A549 (cell line): ENCODE measurements at regions of chr1 and their contacts with region 1.

Region 1: DNA sequence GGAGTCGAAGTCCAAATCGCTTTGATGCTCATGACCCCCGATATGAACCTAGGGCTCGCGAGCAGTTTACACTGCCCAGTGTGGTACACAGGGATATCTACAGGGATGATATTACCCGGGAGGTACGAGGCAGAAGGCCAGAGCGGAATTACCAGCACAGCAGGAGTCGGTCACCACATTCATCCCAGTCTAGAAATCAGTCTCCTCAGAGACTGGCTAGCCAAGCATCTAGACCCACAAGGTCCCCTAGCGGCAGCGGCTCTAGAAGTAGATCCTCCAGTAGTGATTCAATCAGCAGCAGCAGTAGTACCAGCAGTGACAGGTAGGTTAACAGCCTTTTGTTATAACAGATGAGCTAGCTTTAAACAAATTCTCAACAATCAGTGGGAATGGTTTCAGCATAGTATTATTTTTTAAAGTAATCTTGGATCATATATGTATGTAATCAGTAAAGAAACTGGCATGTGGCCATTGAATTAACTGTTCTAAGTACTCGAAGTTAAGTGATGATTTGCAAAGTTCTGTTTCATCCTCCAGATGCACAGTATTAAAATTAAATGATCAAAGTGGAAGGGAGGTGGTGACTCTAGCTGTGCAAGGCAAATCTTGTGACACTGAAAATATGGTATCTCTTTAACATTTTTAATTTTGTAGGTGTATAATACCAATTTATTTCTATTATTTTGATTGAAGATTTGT is 29.0 kb downstream of the SPEN start:
- DNase-seq: peak; percentile 45 to 75
- ATAC-seq: peak; percentile 98 to 99
- H3K4me3 ChIP-seq: no peak overlapping the region
- H3K27ac ChIP-seq: no peak overlapping the region
- H3K4me1 ChIP-seq: peaks cover 22% of the 10 kb centered on the region; the same call in 2 of the 3 replicates
- CTCF ChIP-seq: peak; percentile 19; the same call in 1 of the 3 replicates
- EP300 ChIP-seq: no peak
- POLR2A ChIP-seq: no peak
- RAD21 ChIP-seq: peak; percentile 21 to 29; a peak in 2 of 5 replicates

Region 2: GRCh38 chr1:15810073-15810472 is 66.4 kb before region 1 on chr1:
- CTCF ChIA-PET with region 1: interaction called, 10 read pairs
- POLR2A ChIA-PET with region 1: no interaction called
- DNase-seq: no peak
- ATAC-seq: no peak
- H3K4me3 ChIP-seq: no peak overlapping the region
- H3K27ac ChIP-seq: no peak overlapping the region
- H3K4me1 ChIP-seq: no peaks in the 10 kb centered on the region
- CTCF ChIP-seq: no peak
- EP300 ChIP-seq: no peak
- POLR2A ChIP-seq: no peak
- RAD21 ChIP-seq: no peak